Activated CD8-positive, alpha-beta T cell treated with anti-CD3 and anti-CD28 coated beads, Interleukin-2, amount 10 ng/mL, durations not matched to agents 7 days and 5 days (primary cell): ENCODE measurements at regions of chr10 and their contacts with region 1.

Region 1: GRCh38 chr10:96089670-96090462 is 40.2 kb upstream of the ZNF518A start:
- DNase-seq: peak; percentile 94
- ATAC-seq: peak; percentile 93
- H3K4me3 Mint-ChIP-seq: peak overlapping the region; percentile 96
- H3K27ac Mint-ChIP-seq: peak overlapping the region; percentile 100
- H3K4me1 Mint-ChIP-seq: peaks cover 17% of the 10 kb centered on the region
- H3K27me3 Mint-ChIP-seq: peaks cover 17% of the 10 kb centered on the region

Region 2: GRCh38 chr10:96043033-96043932 is 46.6 kb before region 1 on chr10 and contains the start of gene CCNJ:
- CTCF ChIA-PET with region 1: interaction called, 6 read pairs
- POLR2A ChIA-PET with region 1: interaction called, 14 read pairs
- DNase-seq: peak; percentile 86
- ATAC-seq: peak; percentile 94
- H3K4me3 Mint-ChIP-seq: peak within 1 kb of the TSS; percentile 91
- H3K27ac Mint-ChIP-seq: peak within 1 kb of the TSS; percentile 81
- H3K4me1 Mint-ChIP-seq: peaks cover 37% of the 10 kb centered on the region
- H3K27me3 Mint-ChIP-seq: peaks cover 7% of the 10 kb centered on the region
- total RNA-seq, gene CCNJ: 4.5 to 5.3 TPM

Region 3: DNA sequence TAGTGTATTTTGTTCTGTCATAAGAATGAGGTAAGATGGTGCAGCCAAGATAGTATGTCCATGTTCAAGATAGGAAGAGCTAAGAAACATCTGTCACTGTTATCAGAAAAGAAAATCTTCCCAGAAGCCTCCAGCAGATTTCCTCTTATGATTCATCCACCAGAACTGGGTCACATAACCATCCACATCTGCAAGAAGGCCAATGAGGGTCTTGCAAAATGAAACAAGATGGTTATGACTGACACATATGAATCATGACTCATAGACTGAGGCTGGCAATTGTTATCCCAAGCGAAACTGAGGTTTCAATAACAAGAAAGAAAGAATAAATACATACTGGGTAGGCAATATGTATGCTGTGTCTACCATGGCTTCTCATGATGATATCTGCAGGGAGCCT is 16.1 kb before region 1 on chr10:
- CTCF ChIA-PET with region 1: interaction called, 4 read pairs
- POLR2A ChIA-PET with region 1: interaction called, 10 read pairs
- DNase-seq: no peak
- ATAC-seq: peak; percentile 81
- H3K4me3 Mint-ChIP-seq: no peak overlapping the region
- H3K27ac Mint-ChIP-seq: no peak overlapping the region
- H3K4me1 Mint-ChIP-seq: peaks cover 28% of the 10 kb centered on the region
- H3K27me3 Mint-ChIP-seq: no peaks in the 10 kb centered on the region

Region 4: DNA sequence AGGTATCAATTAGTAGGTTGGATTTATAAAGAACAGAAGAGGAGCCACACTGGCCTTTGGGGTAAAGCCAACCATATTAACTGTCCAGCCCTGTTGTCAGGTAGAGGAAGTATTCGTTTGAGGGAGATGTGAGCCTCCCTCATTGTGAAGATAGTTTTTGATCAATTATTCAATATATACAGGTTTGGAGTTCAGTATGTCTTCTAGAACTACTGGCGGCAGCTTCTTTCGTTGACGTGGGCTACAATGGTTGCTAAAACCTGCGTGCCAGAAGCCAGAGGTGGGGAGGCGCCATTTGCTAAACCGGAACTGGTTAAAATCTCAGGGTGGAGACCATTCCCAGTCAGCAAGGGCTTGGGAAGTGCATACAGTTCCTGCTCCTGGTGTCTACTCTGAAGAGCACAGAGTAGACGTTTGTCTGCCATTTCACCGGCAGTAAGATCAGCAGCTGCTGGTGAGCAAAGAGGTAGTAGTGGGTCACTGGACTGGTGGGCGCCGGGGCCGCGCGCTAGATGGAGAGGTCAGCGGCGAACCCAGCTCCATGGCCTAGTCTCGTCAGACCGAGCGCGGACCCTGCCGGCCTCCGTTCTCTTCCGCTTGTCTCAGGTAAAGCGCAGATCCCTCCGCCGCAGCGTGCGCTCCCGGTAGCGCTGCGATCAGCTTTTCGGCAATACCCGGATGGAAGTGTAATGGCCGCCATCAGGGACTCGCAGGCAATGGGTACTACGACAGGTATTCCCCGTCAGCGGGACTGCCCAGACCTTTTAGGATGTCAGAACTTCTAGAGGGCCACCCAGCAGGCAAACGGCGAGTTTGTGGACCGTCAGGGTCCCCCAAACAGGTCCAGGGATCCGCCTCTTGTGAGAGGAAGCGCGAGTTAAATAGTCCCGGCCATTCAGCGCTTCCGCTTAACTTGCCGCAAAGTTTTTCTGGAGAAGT is 39.8 kb after region 1 on chr10 and contains the start of gene ZNF518A:
- CTCF ChIA-PET with region 1: interaction called, 19 read pairs
- POLR2A ChIA-PET with region 1: interaction called, 164 read pairs
- DNase-seq: peak; percentile 92
- ATAC-seq: peak; percentile 86
- H3K4me3 Mint-ChIP-seq: peak within 1 kb of the TSS; percentile 90
- H3K27ac Mint-ChIP-seq: peak within 1 kb of the TSS; percentile 100
- H3K4me1 Mint-ChIP-seq: peaks cover 24% of the 10 kb centered on the region
- H3K27me3 Mint-ChIP-seq: peaks cover 20% of the 10 kb centered on the region
- total RNA-seq, gene ZNF518A: 15.3 to 16.5 TPM

Region 5: DNA sequence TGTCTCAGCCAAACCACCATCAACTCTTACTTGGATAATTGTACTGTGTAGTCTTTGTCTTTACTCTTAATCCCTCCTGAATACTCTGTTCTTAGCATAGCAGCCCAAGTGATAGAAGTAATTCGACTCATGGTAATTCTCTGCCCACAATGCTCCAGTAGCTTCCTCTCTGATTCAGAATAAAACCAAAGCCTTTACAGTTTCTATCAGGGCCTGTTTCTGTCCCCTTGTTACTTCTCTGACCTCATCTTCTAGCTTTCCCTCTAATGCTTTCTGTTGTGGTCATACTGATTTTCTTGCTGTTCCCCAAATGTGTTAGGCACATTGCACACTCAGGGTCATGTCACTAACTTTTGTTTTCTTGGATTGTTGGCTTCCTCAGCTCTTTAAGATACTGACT is 48.2 kb after region 1 on chr10:
- CTCF ChIA-PET with region 1: no interaction called
- POLR2A ChIA-PET with region 1: interaction called, 10 read pairs
- DNase-seq: no peak
- ATAC-seq: peak; percentile 51
- H3K4me3 Mint-ChIP-seq: no peak overlapping the region
- H3K27ac Mint-ChIP-seq: peak overlapping the region; percentile 22
- H3K4me1 Mint-ChIP-seq: peaks cover 18% of the 10 kb centered on the region
- H3K27me3 Mint-ChIP-seq: no peaks in the 10 kb centered on the region

Region 6: GRCh38 chr10:96168546-96168945 is 78.7 kb after region 1 on chr10:
- CTCF ChIA-PET with region 1: no interaction called
- POLR2A ChIA-PET with region 1: no interaction called
- DNase-seq: no peak
- ATAC-seq: no peak
- H3K4me3 Mint-ChIP-seq: no peak overlapping the region
- H3K27ac Mint-ChIP-seq: no peak overlapping the region
- H3K4me1 Mint-ChIP-seq: no peaks in the 10 kb centered on the region
- H3K27me3 Mint-ChIP-seq: peaks cover 7% of the 10 kb centered on the region